Vagina (tissue), 2 donors: ENCODE measurements at regions of chr13 and their contacts with region 1.

Region 1: GRCh38 chr13:27362064-27362883 is 62.1 kb upstream of the GTF3A start:
- DNase-seq: no peak
- H3K4me3 ChIP-seq: peak overlapping the region; percentile 39 to 44
- H3K27ac ChIP-seq: no peak overlapping the region
- H3K4me1 ChIP-seq: peaks cover 12% of the 10 kb centered on the region
- H3K27me3 ChIP-seq: no peaks in the 10 kb centered on the region
- CTCF ChIP-seq: peak; percentile 85 to 93 (median 91)
- POLR2A ChIP-seq: no peak

Region 2: GRCh38 chr13:26985285-26985878 is 376.9 kb before region 1 on chr13:
- intact Hi-C with region 1: loop called (anchors 2 kb)
- DNase-seq: no peak
- H3K4me3 ChIP-seq: no peak overlapping the region
- H3K27ac ChIP-seq: no peak overlapping the region
- H3K4me1 ChIP-seq: peaks cover 21% of the 10 kb centered on the region
- H3K27me3 ChIP-seq: no peaks in the 10 kb centered on the region
- CTCF ChIP-seq: peak; percentile 66 to 88 (median 87)
- POLR2A ChIP-seq: no peak

Region 3: GRCh38 chr13:27211771-27212364 is 150.4 kb before region 1 on chr13:
- intact Hi-C with region 1: no loop called
- DNase-seq: no peak
- H3K4me3 ChIP-seq: no peak overlapping the region
- H3K27ac ChIP-seq: no peak overlapping the region
- H3K4me1 ChIP-seq: no peaks in the 10 kb centered on the region
- H3K27me3 ChIP-seq: no peaks in the 10 kb centered on the region
- CTCF ChIP-seq: no peak
- POLR2A ChIP-seq: no peak

Region 4: DNA sequence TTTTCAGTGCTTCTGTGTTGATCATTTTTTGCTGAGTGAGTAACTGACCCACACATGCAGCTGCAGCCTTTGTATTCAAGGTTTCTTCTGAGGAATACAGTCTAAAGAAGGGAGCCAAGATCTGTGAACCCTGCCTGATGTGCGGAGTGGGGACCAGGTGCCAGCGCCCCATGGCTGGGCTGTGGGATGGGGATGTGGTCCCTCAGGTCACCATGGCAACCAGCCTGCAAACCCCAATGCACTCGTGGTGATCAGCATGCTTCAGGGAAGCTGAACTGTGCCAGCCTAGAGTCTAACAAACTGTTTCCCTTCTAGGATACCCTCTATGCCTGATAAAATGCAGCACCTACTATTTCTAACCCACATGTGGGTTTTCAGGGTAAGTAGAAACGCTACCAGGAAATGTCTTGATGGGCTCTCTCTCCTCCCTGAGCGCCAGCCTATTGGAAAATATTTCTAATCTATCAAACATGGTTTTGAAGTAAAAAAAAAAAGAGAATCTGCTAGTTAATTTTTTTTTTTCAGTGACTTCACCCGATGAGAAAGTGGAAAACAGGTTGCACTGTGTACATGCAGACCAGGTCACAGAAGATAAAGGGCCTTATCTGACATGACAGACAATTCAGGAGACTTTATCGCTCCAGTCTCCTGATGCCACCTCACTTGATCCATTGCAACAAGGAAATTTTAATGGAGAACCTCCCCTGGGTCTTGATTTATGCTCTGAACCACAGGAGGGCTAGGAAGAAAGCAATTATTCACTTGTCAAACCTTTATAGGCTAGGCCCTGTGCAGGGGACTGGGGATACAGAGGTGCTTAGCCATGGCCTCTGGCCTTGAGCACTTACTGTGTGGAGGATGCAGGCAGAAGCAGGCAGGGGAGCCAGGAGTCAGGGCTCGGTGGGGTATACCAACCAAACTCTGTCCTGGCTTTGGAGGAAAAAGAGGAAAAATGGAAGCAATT is 40.5 kb before region 1 on chr13:
- intact Hi-C with region 1: no loop called
- DNase-seq: no peak
- H3K4me3 ChIP-seq: no peak overlapping the region
- H3K27ac ChIP-seq: no peak overlapping the region
- H3K4me1 ChIP-seq: no peaks in the 10 kb centered on the region
- H3K27me3 ChIP-seq: no peaks in the 10 kb centered on the region
- CTCF ChIP-seq: no peak
- POLR2A ChIP-seq: no peak

Region 5: GRCh38 chr13:27374650-27375049 is 12.4 kb after region 1 on chr13:
- intact Hi-C with region 1: no loop called
- DNase-seq: no peak
- H3K4me3 ChIP-seq: no peak overlapping the region
- H3K27ac ChIP-seq: no peak overlapping the region
- H3K4me1 ChIP-seq: no peaks in the 10 kb centered on the region
- H3K27me3 ChIP-seq: no peaks in the 10 kb centered on the region
- CTCF ChIP-seq: peak; percentile 49 to 55 (median 55)
- POLR2A ChIP-seq: no peak

Region 6: DNA sequence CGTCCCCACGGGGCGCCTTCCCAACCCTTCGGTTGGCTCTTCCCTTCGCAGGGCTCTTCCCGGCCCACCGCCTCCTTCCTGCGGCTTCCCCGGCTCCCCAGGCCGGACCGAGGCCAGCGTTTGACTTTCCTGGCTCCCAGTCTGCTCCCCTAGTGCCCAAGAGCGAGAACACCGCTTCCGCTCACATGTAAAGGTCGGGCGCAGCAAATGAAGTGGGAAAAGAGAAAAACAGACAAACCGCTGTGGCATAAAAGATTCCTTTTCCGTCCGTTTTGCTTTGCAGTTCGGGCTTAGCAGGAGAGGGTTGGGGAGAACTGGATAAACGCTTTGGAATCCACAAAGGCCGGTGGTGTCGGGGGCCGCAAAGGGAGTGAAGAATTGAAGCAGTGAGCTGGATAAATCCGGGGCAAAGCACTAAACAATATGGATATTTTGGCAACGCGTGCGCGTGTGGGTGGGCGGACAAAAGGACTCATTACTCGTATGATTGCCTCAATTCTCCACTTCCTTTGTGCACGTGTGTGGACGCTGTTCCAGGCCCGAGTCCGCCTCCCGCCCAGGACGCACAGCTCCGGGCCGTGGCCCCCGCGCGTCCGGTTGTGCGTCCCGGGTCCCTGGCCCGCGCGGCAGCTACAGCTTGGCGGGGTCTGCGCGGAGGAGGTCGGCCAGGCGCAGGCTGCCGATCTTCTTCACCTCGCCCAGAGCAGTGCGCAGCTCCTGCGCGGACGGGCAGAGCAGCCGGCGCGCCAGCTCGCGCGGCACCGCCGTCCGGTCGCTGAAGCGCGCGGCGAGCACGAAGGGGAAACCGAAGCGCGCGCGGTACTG is 615.4 kb after region 1 on chr13:
- intact Hi-C with region 1: loop called (anchors 10 kb)
- DNase-seq: no peak
- H3K4me3 ChIP-seq: peak overlapping the region in 1 of 2 donors; percentile 16
- H3K27ac ChIP-seq: no peak overlapping the region
- H3K4me1 ChIP-seq: peaks cover 18% of the 10 kb centered on the region
- H3K27me3 ChIP-seq: no peaks in the 10 kb centered on the region
- CTCF ChIP-seq: no peak
- POLR2A ChIP-seq: no peak